CD4-positive, alpha-beta T cell (primary cell): ENCODE measurements at regions of chr14 and their contacts with region 1.

Region 1: DNA sequence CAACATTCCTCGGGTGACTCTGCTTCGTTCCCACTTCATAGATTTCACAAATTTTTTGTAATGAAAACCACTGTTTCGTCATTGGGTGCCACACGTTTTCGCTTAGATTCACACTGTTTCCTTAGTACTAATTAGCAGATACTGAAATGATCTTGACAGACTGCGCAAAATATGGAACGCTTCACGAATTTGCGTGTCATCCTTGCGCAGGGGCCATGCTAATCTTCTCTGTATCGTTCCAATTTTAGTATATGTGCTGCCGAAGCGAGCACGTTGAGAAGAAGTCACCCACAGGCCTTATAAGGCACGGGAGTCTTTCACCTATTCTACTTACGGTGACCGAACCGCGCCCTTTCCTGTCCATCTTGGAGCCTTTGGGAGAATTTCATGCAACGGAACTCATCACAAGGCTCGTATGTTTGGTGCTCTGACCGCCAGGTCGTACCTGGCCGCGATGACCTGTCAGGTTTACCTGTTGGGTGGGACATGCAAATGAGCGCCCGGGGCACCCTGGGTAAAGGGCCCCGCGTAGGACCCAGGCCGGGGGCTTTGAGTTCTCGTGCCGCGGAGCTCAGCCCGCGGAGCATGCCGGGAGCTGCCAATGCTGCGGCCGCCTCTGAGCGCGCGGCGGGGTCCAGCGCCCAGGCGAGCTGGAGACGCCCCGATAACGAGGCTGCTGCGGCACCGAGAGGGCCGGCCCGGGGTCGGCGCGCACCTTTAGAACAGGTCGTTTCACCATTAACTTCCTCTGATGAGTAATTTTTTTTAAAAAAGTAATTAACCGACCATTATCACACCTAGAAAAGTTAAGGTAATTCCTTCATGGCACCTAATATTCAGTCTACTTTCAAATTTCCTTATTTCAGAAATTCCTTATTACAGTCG is at the start of gene RNU6-8:
- DNase-seq: peak; percentile 78 to 94 (median 86)
- ATAC-seq: peak; percentile 81
- H3K4me3 ChIP-seq: peak within 1 kb of the TSS; percentile 85
- H3K4me3 Mint-ChIP-seq: peak within 1 kb of the TSS; percentile 93
- H3K27ac ChIP-seq: peak within 1 kb of the TSS; percentile 90 to 98
- H3K27ac Mint-ChIP-seq: peak within 1 kb of the TSS; percentile 100
- H3K4me1 ChIP-seq: peaks cover 26% of the 10 kb centered on the region
- H3K4me1 Mint-ChIP-seq: peaks cover 30% of the 10 kb centered on the region
- H3K27me3 ChIP-seq: no peaks in the 10 kb centered on the region
- H3K27me3 Mint-ChIP-seq: peaks cover 12% of the 10 kb centered on the region
- CTCF ChIP-seq: no peak
- total RNA-seq, gene RNU6-8: not detected

Region 2: DNA sequence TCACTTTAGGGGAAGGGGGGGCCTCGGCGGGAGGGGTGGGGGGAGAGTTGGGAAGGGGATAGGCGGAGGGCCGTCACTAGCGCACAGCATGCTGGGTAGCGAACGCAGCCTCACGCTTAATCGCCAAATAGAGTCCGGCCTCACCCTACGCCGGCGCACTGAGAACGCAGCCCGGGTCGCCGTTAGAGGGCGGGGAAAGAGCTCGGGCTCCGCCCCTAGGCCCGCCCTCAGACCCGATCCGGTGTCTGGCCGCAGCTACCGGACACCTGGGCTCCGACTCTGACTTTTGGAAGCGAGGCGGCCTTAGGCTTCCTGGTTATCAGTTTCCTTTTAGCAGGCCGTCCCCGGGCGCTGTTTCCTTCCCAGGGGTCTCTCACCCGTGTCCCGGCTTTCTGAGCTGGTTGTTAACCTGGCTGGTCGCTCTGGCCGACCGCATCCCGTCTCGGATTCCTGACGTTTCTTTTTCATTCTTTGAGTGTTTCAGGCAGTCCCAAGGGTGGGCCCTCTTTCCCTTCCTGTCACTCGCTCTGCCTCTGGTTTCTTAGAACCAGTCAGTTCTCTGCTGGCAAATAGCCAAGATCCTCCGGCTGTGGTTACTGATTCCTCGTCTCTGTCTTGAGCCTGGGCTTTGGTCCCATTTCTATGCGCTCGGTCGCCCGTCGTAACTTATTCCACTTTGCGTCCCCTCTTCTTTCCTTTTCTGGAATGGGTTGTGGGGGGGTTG is 1176.7 kb before region 1 on chr14:
- CTCF ChIA-PET with region 1: no interaction called
- POLR2A ChIA-PET with region 1: interaction called, 3 read pairs
- intact Hi-C with region 1: loop called in 1 of 2 experiments (anchors 10 kb)
- DNase-seq: peak; percentile 75 to 96 (median 87)
- ATAC-seq: peak; percentile 85
- H3K4me3 ChIP-seq: peak overlapping the region; percentile 99
- H3K4me3 Mint-ChIP-seq: peak overlapping the region; percentile 98
- H3K27ac ChIP-seq: peak overlapping the region; percentile 87 to 90
- H3K27ac Mint-ChIP-seq: peak overlapping the region; percentile 94
- H3K4me1 ChIP-seq: peaks cover 10% of the 10 kb centered on the region
- H3K4me1 Mint-ChIP-seq: peaks cover 62% of the 10 kb centered on the region
- H3K27me3 ChIP-seq: no peaks in the 10 kb centered on the region
- H3K27me3 Mint-ChIP-seq: no peaks in the 10 kb centered on the region
- CTCF ChIP-seq: no peak

Region 3: GRCh38 chr14:31456841-31457664 is 746.2 kb before region 1 on chr14 and contains the start of gene DTD2:
- CTCF ChIA-PET with region 1: no interaction called
- POLR2A ChIA-PET with region 1: interaction called, 5 read pairs
- intact Hi-C with region 1: loop called in 1 of 2 experiments (anchors 10 kb)
- DNase-seq: peak; percentile 85 to 96 (median 91)
- ATAC-seq: peak; percentile 97
- H3K4me3 ChIP-seq: peak within 1 kb of the TSS; percentile 95
- H3K4me3 Mint-ChIP-seq: peak within 1 kb of the TSS; percentile 93
- H3K27ac ChIP-seq: peak within 1 kb of the TSS; percentile 39 to 71
- H3K27ac Mint-ChIP-seq: peak within 1 kb of the TSS; percentile 94
- H3K4me1 ChIP-seq: peaks cover 9% of the 10 kb centered on the region
- H3K4me1 Mint-ChIP-seq: peaks cover 35% of the 10 kb centered on the region
- H3K27me3 ChIP-seq: no peaks in the 10 kb centered on the region
- H3K27me3 Mint-ChIP-seq: no peaks in the 10 kb centered on the region
- CTCF ChIP-seq: no peak
- total RNA-seq, gene DTD2: 4.6 to 5.7 TPM

Region 4: GRCh38 chr14:31926123-31926522 is 277.1 kb before region 1 on chr14:
- CTCF ChIA-PET with region 1: no interaction called
- POLR2A ChIA-PET with region 1: no interaction called
- intact Hi-C with region 1: loop called in 1 of 2 experiments (anchors 5 kb)
- DNase-seq: peak in 4 of 14 experiments; percentile 23 to 66 (median 64)
- ATAC-seq: peak; percentile 43
- H3K4me3 ChIP-seq: no peak overlapping the region
- H3K4me3 Mint-ChIP-seq: no peak overlapping the region
- H3K27ac ChIP-seq: no peak overlapping the region
- H3K27ac Mint-ChIP-seq: no peak overlapping the region
- H3K4me1 ChIP-seq: no peaks in the 10 kb centered on the region
- H3K4me1 Mint-ChIP-seq: peaks cover 11% of the 10 kb centered on the region
- H3K27me3 ChIP-seq: no peaks in the 10 kb centered on the region
- H3K27me3 Mint-ChIP-seq: no peaks in the 10 kb centered on the region
- CTCF ChIP-seq: peak; percentile 64